ENCODE measurements at regions of chr5 and their contacts with region 1.

Region 1: GRCh38 chr5:80153586-80154126 is 102.2 kb downstream of the SERINC5 start:
- DNase-seq: peak in 7 of 9 donors; percentile 57 to 78 (median 69)
- ATAC-seq: peak; percentile 60
- H3K4me3 ChIP-seq: no peak overlapping the region
- H3K4me3 Mint-ChIP-seq: peak overlapping the region; percentile 48 to 88 (median 80)
- H3K27ac ChIP-seq: peak overlapping the region; percentile 78
- H3K27ac Mint-ChIP-seq: peak overlapping the region; percentile 85 to 100 (median 99)
- H3K4me1 ChIP-seq: peaks cover 9 to 49% of the 10 kb centered on the region in 2 donors
- H3K4me1 Mint-ChIP-seq: peaks cover 17 to 89% (median 72%) of the 10 kb centered on the region in 7 donors
- H3K27me3 ChIP-seq: no peaks in the 10 kb centered on the region
- H3K27me3 Mint-ChIP-seq: no peaks in the 10 kb centered on the region

Region 2: DNA sequence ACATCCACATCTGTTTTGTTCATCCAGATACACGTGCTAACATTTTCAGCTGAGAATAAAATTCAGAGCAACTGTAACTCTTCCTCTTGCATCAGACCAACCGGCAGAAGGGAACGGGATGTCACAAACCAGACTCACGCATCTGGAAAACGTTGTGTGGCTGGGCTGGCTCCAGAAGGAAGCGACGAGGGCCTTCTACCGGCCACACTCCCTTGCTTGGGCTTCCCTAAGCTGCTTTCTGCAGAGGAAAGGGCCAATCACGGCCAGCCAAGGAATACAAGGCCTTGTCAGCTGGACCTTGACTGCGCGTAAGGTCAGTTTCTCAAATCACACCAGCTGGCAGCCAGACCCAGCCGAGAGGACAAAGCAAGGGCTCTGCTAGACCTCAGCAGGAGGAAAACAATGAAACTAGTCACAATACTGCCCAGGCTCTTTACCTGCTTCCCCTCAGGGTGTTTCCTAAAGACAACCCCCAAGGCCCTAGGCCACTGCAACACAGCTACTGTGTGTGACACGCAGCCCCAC is 12.4 kb before region 1 on chr5:
- CTCF ChIA-PET with region 1: interaction called, 5 read pairs
- POLR2A ChIA-PET with region 1: interaction called, 124 read pairs
- intact Hi-C with region 1: loop called in 1 of 2 experiments (anchors 1 kb)
- DNase-seq: peak in 1 of 9 donors; percentile 18
- ATAC-seq: no peak
- H3K4me3 ChIP-seq: no peak overlapping the region
- H3K4me3 Mint-ChIP-seq: peak overlapping the region in 9 of 10 donors; percentile 27 to 66 (median 47)
- H3K27ac ChIP-seq: peak overlapping the region; percentile 64
- H3K27ac Mint-ChIP-seq: peak overlapping the region; percentile 83 to 95 (median 89)
- H3K4me1 ChIP-seq: peaks cover 37 to 75% of the 10 kb centered on the region in 2 donors
- H3K4me1 Mint-ChIP-seq: peaks cover 58 to 99% (median 75%) of the 10 kb centered on the region in 7 donors
- H3K27me3 ChIP-seq: no peaks in the 10 kb centered on the region
- H3K27me3 Mint-ChIP-seq: no peaks in the 10 kb centered on the region

Region 3: DNA sequence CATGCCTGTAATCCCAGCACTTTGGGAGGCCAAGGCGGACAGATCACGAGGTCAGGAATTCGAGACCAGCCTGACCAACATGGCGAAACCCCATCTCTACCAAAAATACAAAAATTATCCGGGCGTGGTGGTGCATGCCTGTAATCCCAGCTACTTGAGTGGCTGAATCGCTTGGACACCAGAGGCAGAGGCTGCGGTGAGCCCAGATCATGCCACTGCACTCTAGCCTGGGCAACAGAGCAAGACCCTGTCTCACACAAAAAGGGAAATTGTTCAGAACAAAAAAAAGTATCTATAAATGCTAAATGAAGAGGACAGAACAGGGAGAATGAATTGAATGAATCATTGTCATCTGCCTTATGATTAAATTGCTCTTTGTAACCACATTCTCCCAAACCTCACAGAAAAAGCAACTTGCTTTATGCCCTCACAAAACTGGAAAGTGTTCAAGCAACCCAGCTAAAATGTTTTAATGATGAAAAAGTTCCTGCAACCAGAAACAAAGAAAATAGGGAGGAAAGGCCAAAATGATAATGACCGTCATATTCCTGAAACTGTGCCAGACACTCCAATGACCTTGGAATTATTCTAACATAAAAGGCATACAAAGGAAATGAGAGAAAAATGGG is 18.5 kb after region 1 on chr5:
- CTCF ChIA-PET with region 1: interaction called, 3 read pairs
- POLR2A ChIA-PET with region 1: interaction called, 17 read pairs
- intact Hi-C with region 1: no loop called
- DNase-seq: no peak
- ATAC-seq: no peak
- H3K4me3 ChIP-seq: no peak overlapping the region
- H3K4me3 Mint-ChIP-seq: no peak overlapping the region
- H3K27ac ChIP-seq: no peak overlapping the region
- H3K27ac Mint-ChIP-seq: peak overlapping the region in 7 of 9 donors; percentile 58 to 89 (median 78)
- H3K4me1 ChIP-seq: peaks cover 0 to 26% of the 10 kb centered on the region in 2 donors
- H3K4me1 Mint-ChIP-seq: peaks cover 16 to 73% (median 54%) of the 10 kb centered on the region in 7 donors
- H3K27me3 ChIP-seq: no peaks in the 10 kb centered on the region
- H3K27me3 Mint-ChIP-seq: no peaks in the 10 kb centered on the region

Region 4: GRCh38 chr5:80246001-80246758 is 92.5 kb after region 1 on chr5:
- CTCF ChIA-PET with region 1: no interaction called
- POLR2A ChIA-PET with region 1: interaction called, 8 read pairs
- intact Hi-C with region 1: loop called in 1 of 2 experiments (anchors 2 kb)
- DNase-seq: no peak
- ATAC-seq: no peak
- H3K4me3 ChIP-seq: no peak overlapping the region
- H3K4me3 Mint-ChIP-seq: peak overlapping the region in 9 of 10 donors; percentile 18 to 97 (median 52)
- H3K27ac ChIP-seq: peak overlapping the region; percentile 18
- H3K27ac Mint-ChIP-seq: peak overlapping the region; percentile 26 to 92 (median 67)
- H3K4me1 ChIP-seq: peaks cover 11 to 48% of the 10 kb centered on the region in 2 donors
- H3K4me1 Mint-ChIP-seq: peaks cover 45 to 82% (median 65%) of the 10 kb centered on the region in 7 donors
- H3K27me3 ChIP-seq: no peaks in the 10 kb centered on the region
- H3K27me3 Mint-ChIP-seq: no peaks in the 10 kb centered on the region

Region 5: DNA sequence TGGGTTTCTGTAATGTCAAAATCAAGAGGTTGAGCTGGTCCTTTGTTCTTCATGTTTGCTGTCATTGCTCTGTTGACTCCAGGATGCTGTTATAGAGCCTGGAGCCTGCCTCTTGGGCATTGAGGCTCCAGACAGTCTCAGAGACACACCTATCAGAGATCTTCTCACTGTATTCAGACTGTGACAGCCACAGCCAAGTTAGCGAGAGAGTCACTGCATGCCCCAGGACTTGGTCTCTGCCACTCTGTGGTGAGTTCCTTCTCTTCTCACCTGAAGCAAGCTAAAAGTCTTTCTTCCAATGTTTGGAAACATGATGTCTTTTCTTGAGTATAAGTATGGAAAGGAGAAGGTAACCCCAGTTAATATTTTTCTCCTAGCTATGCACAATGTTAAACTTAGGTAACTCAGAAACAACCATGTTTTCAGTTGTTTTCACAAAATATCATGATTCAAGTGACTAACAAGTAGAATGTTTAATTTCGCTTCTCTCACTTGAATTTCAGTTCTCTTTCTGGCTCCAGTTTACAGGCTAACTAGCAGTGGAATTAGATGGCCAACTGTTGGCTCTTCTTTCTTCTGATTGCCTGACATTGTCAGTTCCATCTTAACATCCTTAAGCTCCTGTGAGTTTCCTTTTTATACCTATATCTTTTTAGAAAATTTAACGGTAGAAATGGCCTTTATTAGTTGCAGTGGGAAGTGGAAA is 233.6 kb after region 1 on chr5:
- CTCF ChIA-PET with region 1: no interaction called
- POLR2A ChIA-PET with region 1: no interaction called
- intact Hi-C with region 1: no loop called
- DNase-seq: no peak
- ATAC-seq: no peak
- H3K4me3 ChIP-seq: no peak overlapping the region
- H3K4me3 Mint-ChIP-seq: no peak overlapping the region
- H3K27ac ChIP-seq: no peak overlapping the region
- H3K27ac Mint-ChIP-seq: no peak overlapping the region
- H3K4me1 ChIP-seq: no peaks in the 10 kb centered on the region
- H3K4me1 Mint-ChIP-seq: peaks cover 0 to 12% (median 6%) of the 10 kb centered on the region in 7 donors
- H3K27me3 ChIP-seq: no peaks in the 10 kb centered on the region
- H3K27me3 Mint-ChIP-seq: peaks cover 0 to 19% (median 11%) of the 10 kb centered on the region in 5 donors